SK-N-SH (cell line): ENCODE measurements at regions of chr17 and their contacts with region 1.

Region 1: GRCh38 chr17:28842282-28843012 is at the start of gene FAM222B:
- DNase-seq: peak; percentile 99
- H3K4me3 ChIP-seq: peak within 1 kb of the TSS; percentile 70 to 91
- H3K27ac ChIP-seq: peak within 1 kb of the TSS; percentile 58 to 73
- H3K4me1 ChIP-seq: peaks cover 3 to 5% of the 10 kb centered on the region in 2 experiments; a peak in 1 of 4 replicates
- H3K27me3 ChIP-seq: no peaks in the 10 kb centered on the region
- CTCF ChIP-seq: no peak
- EP300 ChIP-seq: no peak
- RAD21 ChIP-seq: no peak
- polyA plus RNA-seq, gene FAM222B: 5.8 and 9.0 TPM in 2 replicates

Region 2: GRCh38 chr17:28828294-28829040 is 14.0 kb before region 1 on chr17:
- CTCF ChIA-PET with region 1: interaction called, 12 read pairs
- POLR2A ChIA-PET with region 1: no interaction called
- DNase-seq: no peak
- H3K4me3 ChIP-seq: no peak overlapping the region
- H3K27ac ChIP-seq: no peak overlapping the region; a peak in 1 of 4 replicates
- H3K4me1 ChIP-seq: no peaks in the 10 kb centered on the region
- H3K27me3 ChIP-seq: no peaks in the 10 kb centered on the region
- CTCF ChIP-seq: no peak
- EP300 ChIP-seq: no peak
- RAD21 ChIP-seq: no peak

Region 3: DNA sequence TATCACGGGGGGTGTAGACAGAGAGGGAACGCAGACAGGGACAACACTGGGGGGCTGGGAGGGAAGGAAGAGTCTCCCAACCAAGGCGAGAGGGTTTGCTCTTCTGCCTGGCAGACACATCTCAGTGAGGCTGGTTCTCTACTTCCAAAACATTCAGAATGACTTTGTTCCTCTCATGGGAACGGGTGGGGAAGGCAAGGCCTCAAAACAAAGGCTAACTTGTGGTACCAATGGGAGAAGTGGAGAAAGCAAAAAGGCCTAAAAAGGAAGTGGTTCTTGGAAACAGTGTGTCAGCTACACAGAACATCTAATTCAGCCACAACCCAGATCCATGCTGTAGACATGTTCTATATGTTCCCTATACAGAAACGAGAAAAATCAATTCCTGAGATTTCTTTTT is 47.5 kb after region 1 on chr17:
- CTCF ChIA-PET with region 1: no interaction called
- POLR2A ChIA-PET with region 1: no interaction called
- DNase-seq: no peak
- H3K4me3 ChIP-seq: no peak overlapping the region
- H3K27ac ChIP-seq: no peak overlapping the region
- H3K4me1 ChIP-seq: peaks cover 0 to 13% of the 10 kb centered on the region in 2 experiments; a peak in 2 of 4 replicates
- H3K27me3 ChIP-seq: no peaks in the 10 kb centered on the region
- CTCF ChIP-seq: no peak
- EP300 ChIP-seq: no peak
- RAD21 ChIP-seq: no peak